ENCODE measurements at regions of chr14 and their contacts with region 1.

Region 1: GRCh38 chr14:75906676-75907280 is 75.0 kb downstream of the TGFB3 start:
- DNase-seq: peak; percentile 70
- ATAC-seq: peak; percentile 63; the same call in 1 of the 2 replicates
- H3K4me3 ChIP-seq: no peak overlapping the region
- H3K27ac ChIP-seq: no peak overlapping the region
- H3K4me1 ChIP-seq: peaks cover 2% of the 10 kb centered on the region; the same call in 1 of the 2 replicates
- H3K27me3 ChIP-seq: no peaks in the 10 kb centered on the region
- CTCF ChIP-seq: peak; percentile 80
- POLR2A ChIP-seq: no peak
- RAD21 ChIP-seq: peak; percentile 60

Region 2: DNA sequence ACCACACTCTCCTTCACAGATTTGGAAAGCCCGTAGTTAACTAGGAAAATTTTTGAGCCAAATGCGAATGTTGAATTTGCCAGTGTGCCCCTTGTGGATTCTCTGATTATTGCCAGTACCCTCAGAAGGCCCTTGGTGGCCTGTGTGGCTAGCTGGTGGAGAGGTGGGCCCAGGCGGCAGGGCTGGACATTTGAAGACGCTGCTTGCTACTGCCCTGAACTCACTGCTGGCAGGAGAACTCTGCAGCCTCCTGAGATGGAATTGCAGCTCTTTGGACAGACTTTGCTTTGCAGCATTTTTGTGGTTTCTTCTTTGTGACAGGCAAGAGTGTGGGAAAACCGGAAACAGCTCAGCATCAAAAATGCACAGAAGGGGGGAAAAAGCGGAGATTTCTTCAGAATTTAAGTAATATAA is 22.6 kb before region 1 on chr14:
- CTCF ChIA-PET with region 1: interaction called, 10 read pairs
- POLR2A ChIA-PET with region 1: no interaction called
- dilution Hi-C with region 1: no loop called
- in situ Hi-C with region 1: no loop called
- intact Hi-C with region 1: no loop called
- DNase-seq: peak; percentile 86
- ATAC-seq: peak; percentile 74
- H3K4me3 ChIP-seq: no peak overlapping the region
- H3K27ac ChIP-seq: no peak overlapping the region
- H3K4me1 ChIP-seq: peaks cover 14% of the 10 kb centered on the region
- H3K27me3 ChIP-seq: no peaks in the 10 kb centered on the region
- CTCF ChIP-seq: peak; percentile 30; the same call in 1 of the 2 replicates
- POLR2A ChIP-seq: no peak
- RAD21 ChIP-seq: peak; percentile 19; the same call in 1 of the 2 replicates

Region 3: DNA sequence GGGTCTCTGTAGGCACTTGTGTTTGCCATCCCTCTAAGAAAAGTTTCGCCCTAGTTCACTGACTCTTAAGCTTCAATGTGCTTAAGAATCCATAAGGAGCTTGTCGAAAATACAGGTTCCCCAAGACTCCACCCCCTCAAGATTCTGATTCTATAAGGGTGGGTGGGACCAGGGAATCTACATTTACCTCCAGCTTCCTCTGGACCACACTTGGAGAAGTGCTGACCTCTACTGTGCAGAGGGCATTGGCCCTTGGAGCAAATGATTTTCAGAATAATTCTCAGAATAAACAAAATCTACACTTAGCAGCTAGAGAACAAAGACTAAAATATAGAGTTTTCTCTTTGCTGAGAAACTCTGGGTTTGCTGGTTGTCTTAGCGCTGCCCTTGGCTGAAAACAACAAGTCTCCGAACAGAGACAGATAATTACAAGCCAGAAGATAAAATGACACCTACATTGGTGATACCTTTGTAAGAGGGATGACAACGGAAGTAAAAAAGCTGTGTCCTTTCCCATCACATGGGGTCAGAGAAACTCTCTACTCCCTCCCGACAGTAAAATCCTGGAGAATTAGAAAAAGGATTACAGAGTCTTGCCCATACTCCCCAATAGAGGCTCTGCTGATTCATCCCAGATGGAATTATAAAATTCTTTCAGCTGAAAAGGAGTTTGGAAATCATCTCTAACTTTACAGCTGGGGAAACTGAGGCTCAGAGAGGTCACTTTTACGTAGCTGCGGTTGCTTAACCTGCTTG is 70.2 kb after region 1 on chr14:
- CTCF ChIA-PET with region 1: interaction called, 11 read pairs
- POLR2A ChIA-PET with region 1: no interaction called
- dilution Hi-C with region 1: no loop called
- in situ Hi-C with region 1: no loop called
- intact Hi-C with region 1: loop called (anchors 1 kb)
- DNase-seq: no peak
- ATAC-seq: no peak
- H3K4me3 ChIP-seq: no peak overlapping the region
- H3K27ac ChIP-seq: no peak overlapping the region
- H3K4me1 ChIP-seq: peaks cover 7% of the 10 kb centered on the region; the same call in 1 of the 2 replicates
- H3K27me3 ChIP-seq: no peaks in the 10 kb centered on the region; the same call in none of the 2 replicates
- CTCF ChIP-seq: no peak
- POLR2A ChIP-seq: no peak
- RAD21 ChIP-seq: no peak

Region 4: DNA sequence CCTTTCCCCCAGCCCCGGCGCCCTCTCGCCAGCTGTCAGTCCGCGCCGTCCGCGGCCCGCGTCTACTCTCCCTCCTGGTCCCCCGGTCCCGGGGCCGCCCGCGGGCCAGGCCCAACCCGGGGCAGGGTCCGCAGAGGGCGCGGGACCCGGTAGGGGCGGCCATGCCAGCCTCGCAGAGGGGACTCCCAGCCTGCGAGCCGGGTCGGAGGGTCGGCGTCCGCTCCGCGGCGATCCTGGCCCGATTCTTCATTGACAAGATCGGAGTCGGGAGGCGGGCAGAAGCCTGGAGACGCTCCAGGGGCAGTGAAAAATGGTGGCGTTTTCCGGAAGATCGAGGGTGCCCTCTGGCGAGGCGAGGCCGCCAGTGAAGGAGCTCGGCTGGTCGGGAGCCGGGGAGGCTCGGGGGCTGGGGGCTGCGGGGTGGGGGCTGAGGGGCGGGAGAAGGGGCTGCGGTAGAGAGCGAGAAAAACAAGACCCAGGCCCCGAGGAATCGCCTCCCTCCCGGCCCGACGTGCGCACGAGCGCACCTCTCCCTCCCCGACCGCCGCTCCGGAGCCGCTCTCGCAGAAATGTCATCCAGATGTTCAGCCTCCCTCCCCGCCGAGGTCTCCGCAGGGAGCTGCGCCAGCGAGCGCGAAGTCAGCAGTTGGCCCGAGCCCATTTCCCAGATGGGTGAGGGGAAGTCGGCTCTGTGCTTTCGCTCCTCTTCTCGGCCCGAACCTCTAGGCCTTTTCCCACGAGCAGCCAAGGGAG is 75.7 kb after region 1 on chr14:
- CTCF ChIA-PET with region 1: interaction called, 11 read pairs
- POLR2A ChIA-PET with region 1: no interaction called
- dilution Hi-C with region 1: no loop called
- in situ Hi-C with region 1: no loop called
- intact Hi-C with region 1: loop called (anchors 1 kb)
- DNase-seq: peak; percentile 77
- ATAC-seq: peak; percentile 72
- H3K4me3 ChIP-seq: peak overlapping the region; percentile 50
- H3K27ac ChIP-seq: peak overlapping the region; percentile 66
- H3K4me1 ChIP-seq: peaks cover 7% of the 10 kb centered on the region; the same call in 1 of the 2 replicates
- H3K27me3 ChIP-seq: no peaks in the 10 kb centered on the region; the same call in 1 of the 2 replicates
- CTCF ChIP-seq: peak; percentile 72
- POLR2A ChIP-seq: peak; percentile 7; the same call in 1 of the 2 replicates
- RAD21 ChIP-seq: peak; percentile 81

Region 5: DNA sequence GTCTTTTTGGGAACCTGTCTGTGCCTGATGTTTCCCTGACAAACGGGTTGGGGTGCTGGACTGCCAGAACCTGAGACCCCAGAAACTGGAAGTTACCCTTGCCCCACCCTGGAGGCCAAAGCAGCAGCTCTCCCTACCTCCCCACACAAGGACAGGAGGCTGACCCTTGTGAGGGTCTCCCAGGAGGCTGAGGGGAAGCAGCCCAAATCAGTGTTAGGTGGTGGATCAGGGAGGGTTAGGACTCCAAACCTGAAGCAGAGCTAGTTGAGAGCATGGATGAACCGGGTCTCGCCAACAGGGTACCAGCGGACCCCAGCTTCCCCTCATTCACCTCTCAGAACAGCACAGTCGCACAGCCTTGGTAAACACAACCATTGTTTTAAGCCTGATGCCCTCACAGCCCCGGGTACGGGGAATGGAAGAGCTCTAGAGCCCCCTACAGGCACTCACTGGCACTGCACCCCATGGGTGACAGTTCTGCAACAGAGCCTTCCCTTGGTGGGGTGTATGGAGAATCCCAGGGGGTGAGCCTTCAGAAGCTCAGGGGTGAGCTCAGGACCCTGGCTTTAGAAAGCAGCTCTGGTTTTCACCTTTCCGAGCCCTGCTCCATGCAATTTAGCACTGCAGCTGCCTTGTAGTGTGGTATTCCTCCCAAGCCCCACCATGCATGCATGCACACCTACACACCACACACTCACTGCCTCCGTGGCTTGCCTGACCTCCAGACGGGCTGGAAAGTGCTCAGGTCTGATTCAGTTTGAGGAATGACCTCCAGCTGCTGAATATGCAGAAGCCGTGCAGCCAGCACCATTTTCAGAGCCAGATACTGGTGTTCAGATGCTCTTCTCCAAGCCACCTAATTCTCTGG is 480.4 kb after region 1 on chr14:
- CTCF ChIA-PET with region 1: no interaction called
- POLR2A ChIA-PET with region 1: no interaction called
- dilution Hi-C with region 1: no loop called
- in situ Hi-C with region 1: no loop called
- intact Hi-C with region 1: loop called (anchors 10 kb)
- DNase-seq: peak; percentile 51
- ATAC-seq: peak; percentile 100
- H3K4me3 ChIP-seq: no peak overlapping the region
- H3K27ac ChIP-seq: no peak overlapping the region
- H3K4me1 ChIP-seq: no peaks in the 10 kb centered on the region
- H3K27me3 ChIP-seq: peaks cover 27% of the 10 kb centered on the region
- CTCF ChIP-seq: peak; percentile 87
- POLR2A ChIP-seq: no peak
- RAD21 ChIP-seq: peak; percentile 89